CD4-positive, alpha-beta memory T cell (primary cell): ENCODE measurements at regions of chr18 and their contacts with region 1.

Region 1: GRCh38 chr18:51197661-51198424 is at the start of gene MEX3C:
- DNase-seq: peak; percentile 98 to 99 (median 99)
- H3K4me3 ChIP-seq: peak within 1 kb of the TSS; percentile 76 to 94
- H3K4me3 Mint-ChIP-seq: peak within 1 kb of the TSS; percentile 95 to 98 (median 97)
- H3K27ac ChIP-seq: peak within 1 kb of the TSS; percentile 77
- H3K27ac Mint-ChIP-seq: peak within 1 kb of the TSS; percentile 95 to 99 (median 98)
- H3K4me1 ChIP-seq: peaks cover 24% of the 10 kb centered on the region
- H3K4me1 Mint-ChIP-seq: peaks cover 20 to 39% (median 27%) of the 10 kb centered on the region in 4 donors
- H3K27me3 ChIP-seq: no peaks in the 10 kb centered on the region
- H3K27me3 Mint-ChIP-seq: no peaks in the 10 kb centered on the region
- total RNA-seq, gene MEX3C: 60.9 to 64.8 TPM

Region 2: GRCh38 chr18:49813319-49814146 is 1384.3 kb before region 1 on chr18 and contains the start of gene ACAA2:
- CTCF ChIA-PET with region 1: no interaction called
- POLR2A ChIA-PET with region 1: no interaction called
- intact Hi-C with region 1: loop called (anchors 10 kb)
- DNase-seq: peak; percentile 68 to 84 (median 70)
- H3K4me3 ChIP-seq: peak within 1 kb of the TSS; percentile 88 to 90
- H3K4me3 Mint-ChIP-seq: peak within 1 kb of the TSS; percentile 95 to 100 (median 96)
- H3K27ac ChIP-seq: peak within 1 kb of the TSS; percentile 80
- H3K27ac Mint-ChIP-seq: peak within 1 kb of the TSS; percentile 91 to 99 (median 97)
- H3K4me1 ChIP-seq: peaks cover 51% of the 10 kb centered on the region
- H3K4me1 Mint-ChIP-seq: peaks cover 39 to 69% (median 53%) of the 10 kb centered on the region in 4 donors
- H3K27me3 ChIP-seq: no peaks in the 10 kb centered on the region
- H3K27me3 Mint-ChIP-seq: no peaks in the 10 kb centered on the region
- total RNA-seq, gene ACAA2: 21.8 to 23.8 TPM

Region 3: GRCh38 chr18:50374753-50375391 is 823.0 kb before region 1 on chr18 and contains the start of gene SKA1:
- CTCF ChIA-PET with region 1: no interaction called
- POLR2A ChIA-PET with region 1: no interaction called
- intact Hi-C with region 1: loop called (anchors 2 kb)
- DNase-seq: peak; percentile 89 to 91 (median 90)
- H3K4me3 ChIP-seq: peak within 1 kb of the TSS; percentile 60 to 63
- H3K4me3 Mint-ChIP-seq: peak within 1 kb of the TSS; percentile 79 to 85 (median 82)
- H3K27ac ChIP-seq: peak within 1 kb of the TSS; percentile 57
- H3K27ac Mint-ChIP-seq: peak within 1 kb of the TSS; percentile 81 to 94 (median 91)
- H3K4me1 ChIP-seq: peaks cover 14% of the 10 kb centered on the region
- H3K4me1 Mint-ChIP-seq: peaks cover 6 to 15% (median 11%) of the 10 kb centered on the region in 4 donors
- H3K27me3 ChIP-seq: peaks cover 5% of the 10 kb centered on the region
- H3K27me3 Mint-ChIP-seq: peaks cover 6 to 10% of the 10 kb centered on the region in 2 donors
- total RNA-seq, gene SKA1: 0.28 to 0.47 TPM

Region 4: GRCh38 chr18:50586710-50587109 is 611.1 kb before region 1 on chr18:
- CTCF ChIA-PET with region 1: no interaction called
- POLR2A ChIA-PET with region 1: no interaction called
- intact Hi-C with region 1: no loop called
- DNase-seq: no peak
- H3K4me3 ChIP-seq: no peak overlapping the region
- H3K4me3 Mint-ChIP-seq: no peak overlapping the region
- H3K27ac ChIP-seq: no peak overlapping the region
- H3K27ac Mint-ChIP-seq: no peak overlapping the region
- H3K4me1 ChIP-seq: no peaks in the 10 kb centered on the region
- H3K4me1 Mint-ChIP-seq: no peaks in the 10 kb centered on the region
- H3K27me3 ChIP-seq: no peaks in the 10 kb centered on the region
- H3K27me3 Mint-ChIP-seq: no peaks in the 10 kb centered on the region

Region 5: DNA sequence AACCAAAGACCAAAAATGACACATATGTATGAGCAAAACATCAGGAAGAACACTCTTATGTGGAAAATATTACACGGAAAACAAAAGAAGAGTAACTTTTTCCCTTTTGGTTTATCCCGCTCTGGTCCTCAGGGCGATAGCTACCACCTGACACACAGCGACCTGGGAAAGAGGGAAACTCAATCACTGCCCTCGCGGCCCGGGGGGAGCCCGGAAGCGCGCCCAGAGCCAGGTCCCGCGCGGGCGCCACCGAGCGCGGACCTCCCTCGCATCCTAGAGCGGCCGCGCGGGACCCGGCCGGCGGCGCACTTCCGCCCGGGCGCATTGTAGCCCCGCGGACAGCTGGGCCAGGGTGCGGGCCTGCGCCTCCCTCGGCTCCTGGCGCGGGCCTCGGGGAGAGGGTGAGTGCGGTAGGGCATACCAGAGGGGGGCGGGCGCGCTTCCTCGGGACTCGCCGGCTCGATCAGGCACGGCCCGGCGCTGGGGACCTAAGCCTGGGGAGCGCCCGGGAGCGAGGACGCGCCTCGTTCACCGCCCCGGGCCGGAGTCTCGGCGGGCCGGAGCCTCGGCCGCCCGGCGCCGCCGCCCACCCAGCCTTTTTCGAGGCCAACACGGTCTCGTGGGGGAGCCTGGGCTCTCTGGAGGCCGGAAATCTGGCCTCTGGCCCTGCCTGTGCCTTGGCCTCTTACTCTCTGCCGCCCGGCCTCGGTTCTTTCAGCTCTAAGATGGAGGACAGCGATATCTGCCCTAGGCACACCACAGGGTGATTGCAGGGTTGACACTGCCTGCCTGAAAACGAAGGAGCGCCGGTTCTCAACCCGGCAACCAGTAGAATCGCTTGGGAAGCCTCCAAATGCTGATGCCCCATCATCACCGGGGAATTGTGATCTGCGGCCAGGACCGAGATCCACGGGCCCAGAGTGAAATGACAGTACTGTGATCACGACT is 229.9 kb before region 1 on chr18 and contains the start of gene ELAC1:
- CTCF ChIA-PET with region 1: no interaction called
- POLR2A ChIA-PET with region 1: interaction called, 22 read pairs
- intact Hi-C with region 1: loop called (anchors 1 kb)
- DNase-seq: peak; percentile 67 to 76 (median 68)
- H3K4me3 ChIP-seq: peak within 1 kb of the TSS; percentile 77 to 88
- H3K4me3 Mint-ChIP-seq: peak within 1 kb of the TSS; percentile 95 to 99 (median 96)
- H3K27ac ChIP-seq: peak within 1 kb of the TSS; percentile 81
- H3K27ac Mint-ChIP-seq: peak within 1 kb of the TSS; percentile 90 to 98 (median 96)
- H3K4me1 ChIP-seq: peaks cover 25% of the 10 kb centered on the region
- H3K4me1 Mint-ChIP-seq: peaks cover 18 to 29% (median 21%) of the 10 kb centered on the region in 4 donors
- H3K27me3 ChIP-seq: no peaks in the 10 kb centered on the region
- H3K27me3 Mint-ChIP-seq: peaks cover 0 to 3% of the 10 kb centered on the region in 2 donors
- total RNA-seq, gene ELAC1: 11.6 to 11.7 TPM

Region 6: DNA sequence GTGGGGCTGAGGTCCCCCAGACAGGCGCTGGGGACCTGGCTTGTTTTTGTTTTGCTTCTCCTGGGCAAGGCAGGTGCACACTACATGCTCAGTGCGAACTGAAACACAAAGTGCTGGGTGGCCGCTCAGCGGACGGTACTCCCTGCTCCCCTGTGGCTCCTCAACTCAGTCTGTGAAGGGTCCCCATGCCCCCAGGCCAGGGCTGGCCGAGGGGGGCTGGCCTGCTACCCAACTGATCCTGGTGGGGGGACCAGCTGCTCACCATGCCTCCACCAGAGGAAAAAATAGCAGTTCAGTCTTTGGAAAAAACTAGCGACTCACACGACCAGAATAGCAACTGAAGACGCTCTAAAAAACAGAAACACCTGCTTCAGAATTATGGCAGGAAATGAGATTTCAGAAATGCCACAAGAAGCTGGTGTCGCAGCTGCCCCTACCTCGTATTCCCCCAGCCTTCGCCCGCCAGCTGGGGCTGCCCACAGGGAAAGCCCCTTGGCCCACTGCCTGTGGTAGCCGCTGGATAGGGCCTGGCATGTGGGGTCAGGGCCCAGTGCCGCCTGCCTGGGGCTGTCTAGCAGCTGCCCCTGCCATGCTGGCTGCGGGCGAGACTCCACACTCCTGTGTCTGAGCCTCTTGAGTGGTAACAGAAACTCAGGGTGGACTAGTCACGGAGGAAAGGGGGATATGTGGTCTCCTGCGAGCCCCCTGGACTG is 44.0 kb before region 1 on chr18:
- CTCF ChIA-PET with region 1: interaction called, 30 read pairs
- POLR2A ChIA-PET with region 1: interaction called, 106 read pairs
- intact Hi-C with region 1: loop called (anchors 1 kb)
- DNase-seq: peak; percentile 26 to 69 (median 46)
- H3K4me3 ChIP-seq: peak overlapping the region; percentile 47 to 53
- H3K4me3 Mint-ChIP-seq: peak overlapping the region; percentile 81 to 90 (median 85)
- H3K27ac ChIP-seq: peak overlapping the region; percentile 50
- H3K27ac Mint-ChIP-seq: peak overlapping the region; percentile 78 to 92 (median 87)
- H3K4me1 ChIP-seq: peaks cover 36% of the 10 kb centered on the region
- H3K4me1 Mint-ChIP-seq: peaks cover 20 to 41% (median 29%) of the 10 kb centered on the region in 4 donors
- H3K27me3 ChIP-seq: no peaks in the 10 kb centered on the region
- H3K27me3 Mint-ChIP-seq: no peaks in the 10 kb centered on the region

Region 7: GRCh38 chr18:51182824-51183223 is 15.0 kb before region 1 on chr18:
- CTCF ChIA-PET with region 1: interaction called, 12 read pairs
- POLR2A ChIA-PET with region 1: interaction called, 23 read pairs
- intact Hi-C with region 1: loop called (anchors 1 kb)
- DNase-seq: no peak
- H3K4me3 ChIP-seq: no peak overlapping the region
- H3K4me3 Mint-ChIP-seq: peak overlapping the region in 2 of 8 donors; percentile 10 to 26
- H3K27ac ChIP-seq: no peak overlapping the region
- H3K27ac Mint-ChIP-seq: no peak overlapping the region
- H3K4me1 ChIP-seq: peaks cover 61% of the 10 kb centered on the region
- H3K4me1 Mint-ChIP-seq: peaks cover 41 to 75% (median 54%) of the 10 kb centered on the region in 4 donors
- H3K27me3 ChIP-seq: no peaks in the 10 kb centered on the region
- H3K27me3 Mint-ChIP-seq: no peaks in the 10 kb centered on the region

Region 8: DNA sequence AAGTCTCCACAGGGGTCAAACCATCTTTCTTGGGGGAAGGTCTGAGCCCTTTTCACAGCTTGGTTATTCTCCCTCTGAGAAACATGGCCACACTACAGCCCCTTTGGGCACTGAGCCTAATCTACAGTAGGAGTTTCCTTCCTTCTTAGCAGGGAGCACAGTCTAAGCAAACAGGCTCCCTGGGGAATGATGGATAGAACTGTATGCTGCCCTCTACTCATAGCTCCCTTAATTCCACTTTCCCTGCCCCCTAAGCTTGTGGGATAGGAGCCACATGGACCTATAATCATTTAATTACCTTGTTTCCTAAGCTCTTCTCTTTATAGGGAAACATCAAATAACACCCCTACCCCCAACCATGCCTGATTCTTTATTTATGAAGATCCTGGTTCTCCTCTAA is 441.7 kb after region 1 on chr18:
- CTCF ChIA-PET with region 1: no interaction called
- POLR2A ChIA-PET with region 1: no interaction called
- intact Hi-C with region 1: no loop called
- DNase-seq: no peak
- H3K4me3 ChIP-seq: no peak overlapping the region
- H3K4me3 Mint-ChIP-seq: no peak overlapping the region
- H3K27ac ChIP-seq: no peak overlapping the region
- H3K27ac Mint-ChIP-seq: no peak overlapping the region
- H3K4me1 ChIP-seq: no peaks in the 10 kb centered on the region
- H3K4me1 Mint-ChIP-seq: no peaks in the 10 kb centered on the region
- H3K27me3 ChIP-seq: no peaks in the 10 kb centered on the region
- H3K27me3 Mint-ChIP-seq: peaks cover 1 to 3% of the 10 kb centered on the region in 2 donors

Region 9: GRCh38 chr18:52499644-52500043 is 1301.8 kb after region 1 on chr18:
- CTCF ChIA-PET with region 1: no interaction called
- POLR2A ChIA-PET with region 1: no interaction called
- intact Hi-C with region 1: no loop called
- DNase-seq: no peak
- H3K4me3 ChIP-seq: no peak overlapping the region
- H3K4me3 Mint-ChIP-seq: no peak overlapping the region
- H3K27ac ChIP-seq: no peak overlapping the region
- H3K27ac Mint-ChIP-seq: no peak overlapping the region
- H3K4me1 ChIP-seq: no peaks in the 10 kb centered on the region
- H3K4me1 Mint-ChIP-seq: no peaks in the 10 kb centered on the region
- H3K27me3 ChIP-seq: no peaks in the 10 kb centered on the region
- H3K27me3 Mint-ChIP-seq: no peaks in the 10 kb centered on the region